HEK293 (cell line): ENCODE measurements at regions of chr1 and their contacts with region 1.

Region 1: DNA sequence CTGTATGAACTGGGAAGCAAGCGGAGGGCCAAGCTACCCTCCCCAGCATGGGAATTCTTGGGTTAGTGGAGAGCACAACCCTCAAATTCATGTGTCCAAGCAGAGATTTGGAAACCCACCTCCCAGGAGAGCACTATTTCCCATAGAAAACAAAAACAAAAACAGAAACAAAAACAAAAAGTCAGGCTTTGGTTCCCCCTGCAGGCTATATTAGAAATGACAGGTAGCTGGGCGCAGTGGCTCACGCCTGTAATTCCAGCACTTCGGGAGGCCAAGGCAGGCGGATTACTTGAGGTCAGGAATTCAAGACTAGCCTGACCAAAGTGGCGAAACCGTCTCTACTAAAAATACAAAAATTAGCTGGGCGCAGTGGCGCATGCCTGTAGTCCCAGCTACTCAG is 10.8 kb downstream of the MINDY1 start:
- H3K4me3 ChIP-seq: no peak overlapping the region
- H3K27ac ChIP-seq: no peak overlapping the region
- H3K4me1 ChIP-seq: no peaks in the 10 kb centered on the region
- CTCF ChIP-seq: peak; percentile 73

Region 2: GRCh38 chr1:150970808-150971592 is 24.9 kb before region 1 on chr1:
- CTCF ChIA-PET with region 1: interaction called, 12 read pairs
- POLR2A ChIA-PET with region 1: interaction called, 3 read pairs
- H3K4me3 ChIP-seq: no peak overlapping the region
- H3K27ac ChIP-seq: no peak overlapping the region
- H3K4me1 ChIP-seq: peaks cover 19% of the 10 kb centered on the region
- CTCF ChIP-seq: no peak

Region 3: GRCh38 chr1:150979092-150980056 is 16.5 kb before region 1 on chr1:
- CTCF ChIA-PET with region 1: interaction called, 65 read pairs
- POLR2A ChIA-PET with region 1: interaction called, 6 read pairs
- H3K4me3 ChIP-seq: no peak overlapping the region
- H3K27ac ChIP-seq: no peak overlapping the region
- H3K4me1 ChIP-seq: peaks cover 7% of the 10 kb centered on the region; the same call in 1 of the 2 replicates
- CTCF ChIP-seq: peak; percentile 97

Region 4: DNA sequence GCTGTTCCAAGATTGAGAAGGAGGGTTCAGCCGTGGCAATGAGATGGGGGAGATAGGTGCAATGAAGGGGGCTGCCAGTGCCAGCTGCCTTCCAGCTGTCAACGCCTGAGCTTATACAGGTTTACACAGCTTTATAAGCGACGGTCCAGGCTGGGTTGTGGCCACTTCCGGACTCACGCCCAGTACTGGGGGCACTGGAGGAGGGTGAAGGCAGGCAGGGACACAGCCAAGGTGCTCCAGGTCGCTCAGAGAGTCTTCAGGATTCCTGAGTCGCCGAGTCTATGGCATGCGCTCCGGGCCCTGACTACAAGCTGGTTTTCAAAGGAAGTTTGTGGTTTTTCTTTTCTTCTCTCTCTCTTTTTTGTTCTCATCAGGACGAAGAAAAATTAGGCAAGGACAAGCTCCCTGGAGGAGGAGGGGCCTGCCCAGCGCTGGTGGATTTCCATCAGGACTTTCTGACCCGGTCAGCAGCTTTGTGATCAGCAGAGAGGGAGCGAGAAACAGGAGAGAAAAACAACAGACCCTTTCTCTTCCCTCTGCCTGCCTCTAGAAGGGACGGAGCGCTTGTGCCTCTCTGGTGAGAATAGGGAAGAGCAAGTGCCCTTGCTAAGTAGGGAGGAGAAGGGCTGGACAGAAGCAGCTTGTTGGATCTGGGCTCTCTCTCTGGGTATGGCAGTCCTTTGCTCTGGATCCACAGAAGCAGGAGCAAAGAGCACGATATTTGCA is 10.6 kb after region 1 on chr1 and contains the start of gene MINDY1:
- CTCF ChIA-PET with region 1: interaction called, 73 read pairs
- POLR2A ChIA-PET with region 1: interaction called, 17 read pairs
- H3K4me3 ChIP-seq: peak within 1 kb of the TSS; percentile 53
- H3K27ac ChIP-seq: peak within 1 kb of the TSS; percentile 58
- H3K4me1 ChIP-seq: 0 out of 2 replicates have a peak, but pooled peaks cover 3% of the 10 kb centered on the region
- CTCF ChIP-seq: no peak